Lower leg skin (tissue), 4 donors: ENCODE measurements at regions of chr2 and their contacts with region 1.

Region 1: GRCh38 chr2:37005118-37005868 is 39.0 kb upstream of the STRN start:
- DNase-seq: no peak
- H3K4me3 ChIP-seq: no peak overlapping the region
- CTCF ChIP-seq: no peak
- POLR2A ChIP-seq: no peak

Region 2: GRCh38 chr2:36785179-36785795 is 220.0 kb before region 1 on chr2:
- intact Hi-C with region 1: loop called (anchors 10 kb)
- DNase-seq: peak; percentile 51 to 88
- H3K4me3 ChIP-seq: no peak overlapping the region
- CTCF ChIP-seq: peak in 1 of 3 donors; percentile 41
- POLR2A ChIP-seq: no peak

Region 3: DNA sequence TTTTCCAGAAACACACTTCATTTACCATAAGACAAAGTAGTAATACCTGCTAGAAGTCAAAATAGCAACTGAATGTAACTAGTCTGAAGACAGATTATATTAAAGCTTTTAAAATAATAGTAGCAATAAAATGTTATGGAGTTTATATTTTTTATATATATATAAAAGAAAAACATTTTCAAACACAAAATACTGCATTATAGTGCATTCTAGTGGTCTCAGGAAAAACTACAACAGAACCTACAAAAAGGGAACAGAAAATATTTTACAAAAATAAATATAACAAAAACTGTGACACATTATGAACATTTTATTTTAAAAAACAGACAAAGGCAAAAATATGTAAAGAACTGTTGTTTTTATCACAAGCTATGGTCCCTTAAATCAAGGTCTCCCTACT is 87.0 kb before region 1 on chr2:
- intact Hi-C with region 1: no loop called
- DNase-seq: no peak
- H3K4me3 ChIP-seq: no peak overlapping the region
- CTCF ChIP-seq: no peak
- POLR2A ChIP-seq: no peak

Region 4: GRCh38 chr2:37029758-37030157 is 24.5 kb after region 1 on chr2:
- intact Hi-C with region 1: no loop called
- DNase-seq: no peak
- H3K4me3 ChIP-seq: no peak overlapping the region
- CTCF ChIP-seq: no peak
- POLR2A ChIP-seq: no peak